Left cardiac atrium (tissue), 4 donors: ENCODE measurements at regions of chr10 and their contacts with region 1.

Region 1: GRCh38 chr10:35336084-35336831 is at the start of gene CCNY:
- DNase-seq: peak; percentile 88
- ATAC-seq: peak; percentile 93 to 95
- total RNA-seq, gene CCNY: 59.3 to 76.5 TPM

Region 2: GRCh38 chr10:35379226-35380137 is 43.2 kb after region 1 on chr10:
- intact Hi-C with region 1: loop called in 1 of 2 experiments (anchors 5 kb)
- DNase-seq: peak; percentile 76
- ATAC-seq: peak; percentile 84 to 90

Region 3: GRCh38 chr10:35391153-35391953 is 55.1 kb after region 1 on chr10:
- intact Hi-C with region 1: no loop called
- DNase-seq: no peak
- ATAC-seq: no peak

Region 4: DNA sequence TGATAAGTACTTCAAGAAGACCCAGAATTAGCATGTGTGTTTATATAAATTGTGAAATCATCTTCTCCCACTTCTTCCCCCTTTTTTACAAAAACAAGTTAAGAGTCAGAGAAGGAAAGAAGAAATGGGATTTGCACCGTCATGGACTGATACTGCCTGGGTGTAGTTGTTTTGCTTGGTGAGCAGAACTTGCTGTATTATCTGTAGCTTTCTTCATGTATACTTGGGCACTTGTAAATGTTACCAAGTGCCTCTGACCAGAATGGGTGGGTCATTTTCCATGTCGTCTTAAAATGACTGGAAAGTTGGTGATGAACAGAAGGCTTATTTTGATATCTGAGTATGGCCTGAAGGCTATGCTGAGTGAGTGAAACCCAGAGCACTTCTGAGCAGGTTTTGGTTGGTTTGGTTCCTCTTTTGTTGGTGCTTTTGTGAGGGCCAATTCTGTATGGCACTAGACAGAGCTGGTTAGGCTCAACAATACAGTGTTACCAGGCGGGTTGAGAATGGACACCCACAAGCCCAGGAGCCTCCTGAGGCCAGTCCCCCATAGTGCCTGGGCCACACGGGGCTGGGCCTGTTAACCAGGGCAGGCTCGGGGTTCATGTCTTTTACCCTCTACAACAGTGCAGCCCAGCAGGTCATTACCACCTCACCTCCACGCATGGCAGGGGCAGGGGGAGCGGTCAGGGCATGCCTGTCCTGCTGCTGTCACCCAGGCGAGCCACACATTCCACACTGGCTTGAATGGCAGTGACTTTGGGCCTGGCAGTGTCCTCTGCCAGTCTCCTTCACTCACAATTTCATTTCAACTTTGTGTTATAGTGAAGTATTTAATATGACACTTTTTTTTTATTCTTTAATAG is 115.1 kb after region 1 on chr10:
- intact Hi-C with region 1: loop called in 1 of 2 experiments (anchors 10 kb)
- DNase-seq: no peak
- ATAC-seq: peak; percentile 45 to 58

Region 5: GRCh38 chr10:35563261-35563891 is 227.1 kb after region 1 on chr10:
- intact Hi-C with region 1: loop called (anchors 10 kb)
- DNase-seq: peak; percentile 56
- ATAC-seq: peak; percentile 36 to 39